Dorsolateral prefrontal cortex (tissue), 120 donors: ENCODE measurements at regions of chr1 and their contacts with region 1.

Region 1: DNA sequence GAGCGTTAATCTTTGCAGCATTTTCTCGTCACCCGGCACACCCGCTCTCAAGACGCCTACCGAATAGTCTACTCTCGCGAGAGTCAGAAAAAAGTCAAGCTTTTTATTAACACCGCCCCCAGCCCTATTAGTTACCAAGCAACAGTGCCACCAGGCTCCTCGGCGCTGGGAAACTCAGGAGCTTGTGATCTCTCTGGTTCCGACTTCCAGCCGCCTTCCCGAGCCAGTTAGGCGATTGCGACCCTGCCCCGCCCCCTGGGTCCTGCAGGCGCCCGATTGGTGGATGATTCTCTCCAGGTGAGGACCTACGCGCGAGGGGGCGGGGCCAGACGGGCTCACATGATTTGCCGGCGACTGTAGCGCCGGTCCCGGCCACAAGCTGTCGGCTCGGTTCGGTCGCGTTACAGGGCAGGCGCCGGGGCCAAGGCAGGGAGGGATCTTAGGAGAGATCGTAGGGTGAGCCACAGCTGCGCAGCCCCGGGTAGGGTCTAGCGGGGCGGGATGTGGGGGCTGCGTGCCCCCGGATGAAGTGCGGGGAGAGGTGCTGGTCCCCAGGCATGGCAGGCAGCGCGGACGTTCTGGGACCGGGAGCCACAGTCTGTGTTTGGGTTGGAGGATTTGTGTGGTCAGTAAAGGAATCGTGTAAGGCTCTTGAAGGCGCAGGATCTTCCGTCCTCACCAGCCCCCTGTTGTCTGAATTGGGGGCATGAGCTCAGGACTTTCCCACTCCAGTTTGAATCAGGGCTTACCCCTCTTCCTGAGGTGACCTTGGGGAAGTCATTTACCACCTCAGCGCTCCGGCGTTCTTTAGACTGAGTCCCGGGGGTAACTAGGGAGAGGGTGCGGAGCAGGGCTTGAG is at the start of gene PFKFB2:
- DNase-seq: peak; percentile 92 to 99 (median 98)
- H3K4me3 ChIP-seq: peak within 1 kb of the TSS; percentile 58 to 99 (median 81)
- H3K27ac ChIP-seq: peak within 1 kb of the TSS; percentile 55 to 98 (median 93)
- H3K27me3 ChIP-seq: no peaks in the 10 kb centered on the region
- CTCF ChIP-seq: peak in 42 of 56 donors; percentile 10 to 60 (median 37)
- total RNA-seq, gene PFKFB2: 18.5 to 126 (median 47.9) TPM

Region 2: DNA sequence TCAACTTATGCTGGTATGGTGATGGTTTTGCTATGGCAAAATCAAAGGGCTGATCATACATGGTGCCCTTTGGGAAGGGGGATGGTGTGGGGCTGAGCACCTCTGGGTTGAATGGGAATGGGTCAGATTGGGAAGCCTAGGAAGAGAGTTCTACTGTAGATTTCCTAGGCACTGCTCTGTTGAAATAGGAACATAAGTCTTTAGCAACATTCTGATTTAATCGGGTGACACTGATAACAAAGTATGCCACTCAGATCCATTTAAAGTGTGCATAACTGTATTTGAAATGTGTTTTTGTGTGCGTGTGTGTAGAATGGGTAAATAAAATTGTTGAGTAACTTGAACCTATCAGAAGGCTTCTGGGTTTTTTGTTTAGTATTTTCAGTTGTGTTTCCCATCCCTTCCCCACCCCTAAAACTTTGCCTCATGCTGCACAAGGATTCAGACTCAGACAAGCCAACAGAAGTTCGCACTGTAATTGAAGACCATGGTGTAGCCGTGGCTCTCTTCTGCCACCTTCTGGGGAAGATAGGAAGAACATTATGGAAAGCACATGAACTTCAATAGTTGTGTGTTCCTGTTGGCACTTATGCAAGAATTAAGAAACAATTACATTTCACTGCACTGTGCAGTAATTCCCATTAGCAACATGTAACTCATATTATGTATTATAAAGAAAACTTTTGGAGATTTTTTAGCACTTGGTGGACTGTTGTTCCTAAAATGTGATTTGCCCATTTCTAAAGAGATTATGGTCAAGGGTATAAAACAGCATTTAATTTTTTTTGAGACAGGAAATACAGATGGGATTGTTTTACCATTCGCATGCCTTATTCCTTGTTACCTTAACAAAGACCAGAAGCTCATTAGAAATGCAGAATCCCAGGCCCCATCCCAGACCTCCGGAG is 24.6 kb after region 1 on chr1:
- intact Hi-C with region 1: loop called in 1 of 2 experiments (anchors 1 kb)
- DNase-seq: peak in 5 of 10 donors; percentile 31 to 71 (median 48)
- H3K4me3 ChIP-seq: no peak overlapping the region
- H3K27ac ChIP-seq: peak overlapping the region in 6 of 59 donors; percentile 2 to 22 (median 16)
- H3K27me3 ChIP-seq: no peaks in the 10 kb centered on the region
- CTCF ChIP-seq: peak; percentile 54 to 96 (median 87)

Region 3: GRCh38 chr1:207097871-207098324 is 44.8 kb after region 1 on chr1:
- intact Hi-C with region 1: no loop called
- DNase-seq: no peak
- H3K4me3 ChIP-seq: no peak overlapping the region
- H3K27ac ChIP-seq: no peak overlapping the region
- H3K27me3 ChIP-seq: no peaks in the 10 kb centered on the region
- CTCF ChIP-seq: no peak

Region 4: GRCh38 chr1:207321079-207321789 is 268.1 kb after region 1 on chr1 and contains the start of gene CD55:
- intact Hi-C with region 1: loop called in 1 of 2 experiments (anchors 5 kb)
- DNase-seq: peak; percentile 73 to 93 (median 88)
- H3K4me3 ChIP-seq: peak within 1 kb of the TSS; percentile 57 to 98 (median 88)
- H3K27ac ChIP-seq: peak within 1 kb of the TSS; percentile 35 to 98 (median 92)
- H3K27me3 ChIP-seq: no peaks in the 10 kb centered on the region
- CTCF ChIP-seq: peak in 27 of 56 donors; percentile 6 to 50 (median 17)
- total RNA-seq, gene CD55: 11.7 to 83.5 (median 35.7) TPM

Region 5: DNA sequence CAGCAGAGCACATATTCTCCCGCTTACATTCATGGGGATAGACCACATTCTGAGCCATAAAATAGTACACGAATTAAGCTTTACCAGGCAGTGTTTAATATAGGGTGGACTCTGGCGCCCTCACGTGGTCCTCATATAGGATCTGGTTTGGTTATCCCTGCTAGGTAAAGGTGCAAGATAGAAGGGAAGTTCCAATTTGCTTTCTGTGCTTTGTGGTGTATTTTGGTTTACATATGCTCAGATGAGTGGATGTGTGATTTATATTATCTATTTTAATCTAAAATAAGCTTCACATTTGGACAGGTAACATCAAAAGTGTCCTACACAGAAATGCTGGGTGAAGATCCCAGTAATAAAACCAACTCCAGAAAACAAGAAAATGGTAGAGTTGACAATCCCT is 446.4 kb after region 1 on chr1:
- intact Hi-C with region 1: loop called in 1 of 2 experiments (anchors 2 kb)
- DNase-seq: peak; percentile 48 to 89 (median 73)
- H3K4me3 ChIP-seq: no peak overlapping the region
- H3K27ac ChIP-seq: peak overlapping the region in 1 of 59 donors; percentile 26
- H3K27me3 ChIP-seq: peaks cover 0 to 32% (median 13%) of the 10 kb centered on the region in 45 donors
- CTCF ChIP-seq: peak; percentile 2 to 90 (median 77)